B cell (primary cell): ENCODE measurements at regions of chr6 and their contacts with region 1.

Region 1: DNA sequence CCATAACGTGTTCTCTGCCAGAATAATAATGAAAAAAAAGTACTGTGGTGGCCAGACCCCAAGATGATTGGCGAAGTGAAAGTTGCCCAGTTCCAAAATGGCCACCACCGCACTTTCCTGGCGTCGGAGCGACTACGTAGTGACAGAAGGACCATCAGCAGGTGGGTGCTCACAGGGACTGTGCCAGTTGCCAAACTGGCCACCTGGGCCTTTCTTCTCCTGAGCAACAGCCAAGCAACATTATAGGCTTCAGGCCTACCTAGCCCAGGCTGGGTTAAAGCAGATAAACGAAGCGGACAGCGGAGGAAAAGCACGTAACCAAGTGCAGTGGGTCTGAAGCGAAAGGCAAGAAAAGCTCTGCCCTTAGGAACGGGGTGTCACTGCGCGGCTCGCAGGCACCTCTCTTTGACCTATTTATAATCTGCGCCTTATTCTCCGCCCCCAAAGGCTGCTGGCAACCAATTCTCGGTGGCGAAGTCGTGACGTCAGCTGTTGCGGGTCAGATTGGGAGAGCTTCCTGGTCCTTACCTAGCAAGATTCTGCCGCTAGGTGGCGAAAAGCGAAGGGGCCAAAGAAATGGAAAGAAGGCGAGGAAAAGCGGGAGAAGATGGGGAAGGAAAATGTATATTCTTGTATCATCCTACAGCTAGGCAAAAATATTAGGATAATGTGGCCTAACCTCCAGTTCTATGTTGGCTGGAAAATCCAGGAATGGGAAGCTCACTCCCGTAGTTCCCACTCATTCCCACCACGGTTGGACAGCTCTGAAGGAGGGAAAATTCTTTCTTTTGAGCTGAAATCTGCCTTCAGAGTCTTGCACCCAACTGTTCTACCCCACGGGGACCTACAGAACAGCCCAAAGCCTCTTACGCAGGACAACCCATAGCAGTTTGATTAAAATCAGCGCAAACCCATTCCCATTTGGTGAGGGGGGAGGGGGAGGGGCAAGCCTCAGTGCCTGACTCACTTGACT is 6.9 kb upstream of the MOG start:
- DNase-seq: peak; percentile 99
- ATAC-seq: peak; percentile 93
- H3K4me3 ChIP-seq: peak overlapping the region; percentile 61 to 79 (median 74)
- H3K4me3 Mint-ChIP-seq: peak overlapping the region; percentile 98
- H3K27ac ChIP-seq: peak overlapping the region; percentile 91 to 95
- H3K27ac Mint-ChIP-seq: peak overlapping the region; percentile 100
- H3K4me1 ChIP-seq: peaks cover 3 to 15% of the 10 kb centered on the region in 2 donors
- H3K4me1 Mint-ChIP-seq: peaks cover 16% of the 10 kb centered on the region
- H3K27me3 ChIP-seq: peaks cover 0 to 10% (median 3%) of the 10 kb centered on the region in 4 experiments
- H3K27me3 Mint-ChIP-seq: peaks cover 4% of the 10 kb centered on the region
- CTCF ChIP-seq: peak; percentile 96

Region 2: DNA sequence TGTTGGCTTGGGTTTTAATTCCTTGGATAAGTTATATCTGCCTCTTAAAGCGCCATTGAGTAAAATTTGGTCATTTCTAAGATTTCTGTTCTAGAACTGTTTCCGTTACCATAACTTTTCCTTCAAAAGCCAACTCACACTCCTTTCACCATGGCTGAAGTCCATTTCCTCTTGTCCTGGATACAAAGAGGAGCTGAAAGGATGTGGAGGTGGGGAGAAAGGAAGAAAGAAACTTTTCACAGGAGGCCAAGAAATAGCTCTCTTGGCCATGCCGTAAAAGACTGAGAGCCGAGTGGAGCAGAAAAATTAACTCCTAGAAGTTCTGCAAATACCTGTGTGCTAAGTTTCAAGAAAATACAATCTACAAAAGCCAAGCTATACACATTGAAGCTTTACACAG is 38.6 kb before region 1 on chr6:
- CTCF ChIA-PET with region 1: interaction called, 13 read pairs
- POLR2A ChIA-PET with region 1: no interaction called
- intact Hi-C with region 1: no loop called
- DNase-seq: no peak
- ATAC-seq: no peak
- H3K4me3 ChIP-seq: no peak overlapping the region
- H3K4me3 Mint-ChIP-seq: no peak overlapping the region
- H3K27ac ChIP-seq: no peak overlapping the region
- H3K27ac Mint-ChIP-seq: no peak overlapping the region
- H3K4me1 ChIP-seq: no peaks in the 10 kb centered on the region
- H3K4me1 Mint-ChIP-seq: no peaks in the 10 kb centered on the region
- H3K27me3 ChIP-seq: no peaks in the 10 kb centered on the region
- H3K27me3 Mint-ChIP-seq: no peaks in the 10 kb centered on the region
- CTCF ChIP-seq: no peak

Region 3: GRCh38 chr6:29632789-29633533 is 17.0 kb before region 1 on chr6 and contains the start of gene GABBR1:
- CTCF ChIA-PET with region 1: interaction called, 226 read pairs
- POLR2A ChIA-PET with region 1: interaction called, 30 read pairs
- intact Hi-C with region 1: loop called (anchors 1 kb)
- DNase-seq: peak; percentile 78
- ATAC-seq: peak; percentile 82
- H3K4me3 ChIP-seq: peak within 1 kb of the TSS; percentile 45 to 96 (median 93)
- H3K4me3 Mint-ChIP-seq: peak within 1 kb of the TSS; percentile 94
- H3K27ac ChIP-seq: peak within 1 kb of the TSS; percentile 86
- H3K27ac Mint-ChIP-seq: peak within 1 kb of the TSS; percentile 99
- H3K4me1 ChIP-seq: peaks cover 33 to 63% of the 10 kb centered on the region in 2 donors
- H3K4me1 Mint-ChIP-seq: peaks cover 68% of the 10 kb centered on the region
- H3K27me3 ChIP-seq: no peaks in the 10 kb centered on the region
- H3K27me3 Mint-ChIP-seq: no peaks in the 10 kb centered on the region
- CTCF ChIP-seq: no peak
- total RNA-seq, gene GABBR1: 188 and 198 TPM in 2 replicates

Region 4: DNA sequence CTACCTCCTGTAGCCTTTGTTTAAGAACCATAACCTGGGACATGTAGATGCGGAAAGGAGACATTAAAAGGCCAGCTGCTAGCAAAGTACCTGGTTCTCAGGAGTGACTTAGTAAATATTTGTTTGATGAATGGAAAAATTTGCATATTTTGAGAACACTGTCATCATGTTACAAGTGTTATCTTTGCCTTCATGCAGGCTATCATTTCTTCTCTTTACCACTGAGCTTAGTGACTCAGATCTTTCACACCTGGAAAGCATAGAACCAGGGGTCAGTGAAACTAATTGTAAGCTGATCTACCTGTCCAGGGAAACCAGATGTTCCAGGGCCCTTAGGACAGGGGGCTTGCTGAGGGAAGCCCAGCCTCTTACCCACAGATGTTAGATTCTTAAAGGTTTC is 25.6 kb after region 1 on chr6:
- CTCF ChIA-PET with region 1: interaction called, 11 read pairs
- POLR2A ChIA-PET with region 1: no interaction called
- intact Hi-C with region 1: no loop called
- DNase-seq: no peak
- ATAC-seq: no peak
- H3K4me3 ChIP-seq: no peak overlapping the region
- H3K4me3 Mint-ChIP-seq: no peak overlapping the region
- H3K27ac ChIP-seq: no peak overlapping the region
- H3K27ac Mint-ChIP-seq: no peak overlapping the region
- H3K4me1 ChIP-seq: no peaks in the 10 kb centered on the region
- H3K4me1 Mint-ChIP-seq: peaks cover 13% of the 10 kb centered on the region
- H3K27me3 ChIP-seq: peaks cover 0 to 17% (median 8%) of the 10 kb centered on the region in 4 experiments
- H3K27me3 Mint-ChIP-seq: peaks cover 7% of the 10 kb centered on the region
- CTCF ChIP-seq: no peak

Region 5: GRCh38 chr6:29723262-29723665 is 73.3 kb after region 1 on chr6 and contains the start of gene HLA-F:
- CTCF ChIA-PET with region 1: interaction called, 8 read pairs
- POLR2A ChIA-PET with region 1: no interaction called
- intact Hi-C with region 1: loop called (anchors 5 kb)
- DNase-seq: peak; percentile 96
- ATAC-seq: peak; percentile 91
- H3K4me3 ChIP-seq: peak within 1 kb of the TSS; percentile 75 to 100 (median 100)
- H3K4me3 Mint-ChIP-seq: peak within 1 kb of the TSS; percentile 96
- H3K27ac ChIP-seq: peak within 1 kb of the TSS; percentile 99 to 100
- H3K27ac Mint-ChIP-seq: peak within 1 kb of the TSS; percentile 98
- H3K4me1 ChIP-seq: peaks cover 29 to 43% of the 10 kb centered on the region in 2 donors
- H3K4me1 Mint-ChIP-seq: peaks cover 55% of the 10 kb centered on the region
- H3K27me3 ChIP-seq: no peaks in the 10 kb centered on the region
- H3K27me3 Mint-ChIP-seq: no peaks in the 10 kb centered on the region
- CTCF ChIP-seq: no peak
- total RNA-seq, gene HLA-F: 895 and 911 TPM in 2 replicates

Region 6: GRCh38 chr6:29752451-29753308 is 102.7 kb after region 1 on chr6:
- CTCF ChIA-PET with region 1: interaction called, 15 read pairs
- POLR2A ChIA-PET with region 1: interaction called, 5 read pairs
- intact Hi-C with region 1: loop called (anchors 2 kb)
- DNase-seq: peak; percentile 91
- ATAC-seq: peak; percentile 63
- H3K4me3 ChIP-seq: peak overlapping the region; percentile 57 to 94 (median 84)
- H3K4me3 Mint-ChIP-seq: peak overlapping the region; percentile 97
- H3K27ac ChIP-seq: peak overlapping the region; percentile 76 to 83
- H3K27ac Mint-ChIP-seq: peak overlapping the region; percentile 97
- H3K4me1 ChIP-seq: peaks cover 22 to 29% of the 10 kb centered on the region in 2 donors
- H3K4me1 Mint-ChIP-seq: peaks cover 47% of the 10 kb centered on the region
- H3K27me3 ChIP-seq: no peaks in the 10 kb centered on the region
- H3K27me3 Mint-ChIP-seq: no peaks in the 10 kb centered on the region
- CTCF ChIP-seq: peak; percentile 97

Region 7: GRCh38 chr6:29764422-29765196 is 114.6 kb after region 1 on chr6:
- CTCF ChIA-PET with region 1: no interaction called
- POLR2A ChIA-PET with region 1: no interaction called
- intact Hi-C with region 1: no loop called
- DNase-seq: no peak
- ATAC-seq: no peak
- H3K4me3 ChIP-seq: no peak overlapping the region
- H3K4me3 Mint-ChIP-seq: no peak overlapping the region
- H3K27ac ChIP-seq: no peak overlapping the region
- H3K27ac Mint-ChIP-seq: no peak overlapping the region
- H3K4me1 ChIP-seq: peaks cover 0 to 7% of the 10 kb centered on the region in 2 donors
- H3K4me1 Mint-ChIP-seq: peaks cover 9% of the 10 kb centered on the region
- H3K27me3 ChIP-seq: peaks cover 0 to 3% (median 0%) of the 10 kb centered on the region in 4 experiments
- H3K27me3 Mint-ChIP-seq: peaks cover 22% of the 10 kb centered on the region
- CTCF ChIP-seq: no peak